A673 (cell line): ENCODE measurements at regions of chr22 and their contacts with region 1.

Region 1: GRCh38 chr22:26124991-26125725 is 44.1 kb upstream of the SEZ6L start:
- DNase-seq: peak; percentile 7
- H3K4me3 ChIP-seq: no peak overlapping the region
- H3K27ac ChIP-seq: no peak overlapping the region
- H3K4me1 ChIP-seq: peaks cover 14% of the 10 kb centered on the region
- H3K27me3 ChIP-seq: peaks cover 19% of the 10 kb centered on the region
- CTCF ChIP-seq: no peak

Region 2: GRCh38 chr22:25853501-25854284 is 271.5 kb before region 1 on chr22:
- CTCF ChIA-PET with region 1: no interaction called
- POLR2A ChIA-PET with region 1: no interaction called
- intact Hi-C with region 1: no loop called
- DNase-seq: peak; percentile 60
- H3K4me3 ChIP-seq: no peak overlapping the region
- H3K27ac ChIP-seq: no peak overlapping the region
- H3K4me1 ChIP-seq: no peaks in the 10 kb centered on the region
- H3K27me3 ChIP-seq: peaks cover 4% of the 10 kb centered on the region
- CTCF ChIP-seq: peak; percentile 54

Region 3: DNA sequence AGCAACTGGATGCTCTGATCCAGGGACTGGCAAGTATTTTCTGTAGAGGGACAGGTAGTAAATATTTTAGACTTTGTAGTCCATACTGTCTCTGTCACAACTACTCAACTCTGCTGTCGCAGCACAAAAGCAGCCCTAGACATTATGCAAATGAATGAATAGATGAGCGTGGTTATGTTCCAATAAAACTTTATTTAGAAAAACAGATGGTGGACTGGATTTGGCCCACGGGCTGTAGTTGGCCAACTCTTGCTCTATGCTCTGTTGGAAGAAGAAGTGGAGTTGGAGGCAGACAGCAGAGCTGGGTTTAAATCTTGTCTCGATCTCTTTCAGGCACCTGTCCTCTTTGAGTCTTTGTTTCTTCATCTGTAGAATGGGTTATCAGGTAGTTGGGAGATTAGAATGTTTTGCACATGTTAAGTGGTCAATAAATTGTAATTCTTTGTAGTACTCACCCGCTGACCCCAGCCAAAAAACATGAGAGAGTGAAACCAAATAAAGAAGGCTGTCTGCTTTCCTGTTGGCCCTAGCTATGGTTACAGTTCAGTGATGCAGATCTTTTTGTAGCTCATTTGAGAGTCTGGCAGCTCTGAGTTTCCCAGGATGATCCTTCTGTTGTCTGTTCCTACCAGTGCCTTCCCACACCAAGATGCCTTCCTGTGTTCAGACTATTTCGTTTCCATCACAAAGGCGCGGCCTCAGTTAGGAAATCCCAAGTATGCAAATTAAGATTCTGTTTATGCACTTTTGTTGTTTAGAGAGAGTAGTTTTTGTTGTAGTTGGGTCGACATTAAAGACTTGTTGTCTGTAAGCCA is 154.0 kb before region 1 on chr22:
- CTCF ChIA-PET with region 1: no interaction called
- POLR2A ChIA-PET with region 1: no interaction called
- intact Hi-C with region 1: no loop called
- DNase-seq: peak; percentile 12
- H3K4me3 ChIP-seq: no peak overlapping the region
- H3K27ac ChIP-seq: no peak overlapping the region
- H3K4me1 ChIP-seq: peaks cover 6% of the 10 kb centered on the region
- H3K27me3 ChIP-seq: no peaks in the 10 kb centered on the region
- CTCF ChIP-seq: no peak

Region 4: GRCh38 chr22:26019596-26019995 is 105.6 kb before region 1 on chr22:
- CTCF ChIA-PET with region 1: no interaction called
- POLR2A ChIA-PET with region 1: no interaction called
- intact Hi-C with region 1: loop called (anchors 10 kb)
- DNase-seq: peak; percentile 54
- H3K4me3 ChIP-seq: no peak overlapping the region
- H3K27ac ChIP-seq: no peak overlapping the region
- H3K4me1 ChIP-seq: peaks cover 25% of the 10 kb centered on the region
- H3K27me3 ChIP-seq: no peaks in the 10 kb centered on the region
- CTCF ChIP-seq: no peak